Activated CD4-positive, alpha-beta T cell treated with anti-CD3 and anti-CD28 coated beads, Interleukin-2, amount 10 ng/mL, durations not matched to agents 7 days and 5 days (primary cell): ENCODE measurements at regions of chr7 and their contacts with region 1.

Region 1: DNA sequence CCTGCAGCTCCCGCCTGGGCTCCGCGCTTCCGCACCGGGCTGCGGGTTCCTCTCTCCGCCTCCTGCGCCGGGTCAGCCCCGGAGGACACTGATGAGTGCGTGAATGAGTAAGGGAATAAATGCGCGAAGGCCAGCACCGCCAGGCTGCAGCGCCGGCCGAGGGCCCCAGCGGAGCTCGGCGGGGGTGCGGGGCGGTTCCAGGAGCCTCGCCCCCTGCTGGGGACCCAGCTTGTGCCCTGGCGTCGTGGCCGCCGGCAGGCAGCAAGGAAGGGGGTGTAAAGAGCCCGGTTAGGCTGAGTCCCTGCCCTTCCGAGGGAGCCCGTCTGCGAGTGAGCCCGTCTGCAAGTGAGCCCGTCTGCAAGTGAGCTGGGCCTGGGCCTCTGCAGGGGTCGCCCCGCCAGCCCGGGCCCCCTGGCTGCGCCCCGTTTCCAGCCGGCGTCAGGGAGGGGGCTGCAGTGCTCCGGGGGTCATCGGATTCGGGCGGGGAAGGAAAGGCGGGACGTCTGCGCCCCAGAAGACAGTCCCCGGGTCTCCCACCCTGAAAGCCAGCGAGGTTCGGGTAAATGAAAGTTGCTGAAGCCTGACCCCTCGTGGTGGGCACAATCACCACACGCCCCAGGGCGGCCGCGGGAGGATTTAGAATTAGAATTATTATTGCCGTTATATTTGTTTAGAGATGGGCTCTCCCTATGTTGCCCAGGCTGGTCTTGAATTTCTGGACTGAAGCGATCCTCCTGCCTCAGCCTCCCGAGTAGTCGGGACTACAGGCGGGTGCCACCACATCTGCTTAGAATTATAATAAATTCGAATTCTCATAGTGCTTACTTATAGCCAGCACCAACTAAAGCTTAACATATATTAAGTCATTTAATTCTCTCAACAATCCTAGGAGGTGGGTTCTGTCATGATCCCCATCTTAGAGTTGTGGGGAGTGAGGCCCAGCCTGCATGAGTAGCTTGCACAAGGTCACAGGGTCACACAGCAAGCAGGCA is 8.6 kb upstream of the CRYGN start:
- DNase-seq: peak; percentile 82
- H3K4me3 Mint-ChIP-seq: peak overlapping the region; percentile 68
- H3K27ac Mint-ChIP-seq: peak overlapping the region; percentile 79
- H3K4me1 Mint-ChIP-seq: peaks cover 12% of the 10 kb centered on the region
- H3K27me3 Mint-ChIP-seq: peaks cover 16% of the 10 kb centered on the region

Region 2: DNA sequence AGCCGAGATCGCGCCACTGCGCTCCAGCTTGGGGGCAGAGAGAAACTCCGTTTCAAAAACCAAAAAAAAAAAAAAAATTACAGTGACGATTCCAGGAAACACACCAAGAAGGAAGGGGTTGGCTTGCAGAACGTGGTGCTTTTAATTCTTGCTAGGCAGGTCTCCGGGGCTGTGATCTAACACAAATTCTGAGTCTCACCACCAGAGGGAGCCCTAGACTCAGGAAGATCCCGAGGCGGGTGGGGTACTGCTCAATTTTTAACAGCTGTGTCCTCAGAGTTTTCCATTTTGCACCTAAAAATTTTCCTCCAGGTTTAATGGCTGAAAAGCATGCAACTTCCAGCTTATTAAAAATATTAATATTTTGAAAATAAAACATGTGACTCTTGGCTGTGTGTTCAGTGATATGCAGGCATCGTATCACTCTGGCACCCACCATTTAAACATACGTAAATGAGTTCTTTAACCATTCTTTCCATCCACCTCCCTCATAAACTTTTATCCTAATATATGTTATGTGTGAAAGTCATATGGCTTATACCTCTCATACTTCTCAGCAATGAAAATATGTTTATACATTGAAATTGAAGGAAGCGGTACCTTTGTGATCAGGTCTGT is 133.4 kb before region 1 on chr7:
- CTCF ChIA-PET with region 1: interaction called, 10 read pairs
- POLR2A ChIA-PET with region 1: no interaction called
- DNase-seq: peak; percentile 89
- H3K4me3 Mint-ChIP-seq: no peak overlapping the region
- H3K27ac Mint-ChIP-seq: peak overlapping the region; percentile 81
- H3K4me1 Mint-ChIP-seq: peaks cover 16% of the 10 kb centered on the region
- H3K27me3 Mint-ChIP-seq: no peaks in the 10 kb centered on the region

Region 3: GRCh38 chr7:151340794-151341356 is 107.7 kb before region 1 on chr7:
- CTCF ChIA-PET with region 1: no interaction called
- POLR2A ChIA-PET with region 1: no interaction called
- DNase-seq: no peak
- H3K4me3 Mint-ChIP-seq: peak overlapping the region; percentile 86
- H3K27ac Mint-ChIP-seq: peak overlapping the region; percentile 85
- H3K4me1 Mint-ChIP-seq: peaks cover 31% of the 10 kb centered on the region
- H3K27me3 Mint-ChIP-seq: no peaks in the 10 kb centered on the region

Region 4: GRCh38 chr7:151351027-151351426 is 97.5 kb before region 1 on chr7:
- CTCF ChIA-PET with region 1: interaction called, 11 read pairs
- POLR2A ChIA-PET with region 1: no interaction called
- DNase-seq: peak; percentile 40
- H3K4me3 Mint-ChIP-seq: peak overlapping the region; percentile 45
- H3K27ac Mint-ChIP-seq: peak overlapping the region; percentile 92
- H3K4me1 Mint-ChIP-seq: peaks cover 59% of the 10 kb centered on the region
- H3K27me3 Mint-ChIP-seq: no peaks in the 10 kb centered on the region

Region 5: GRCh38 chr7:151368136-151368571 is 80.4 kb before region 1 on chr7:
- CTCF ChIA-PET with region 1: interaction called, 26 read pairs
- POLR2A ChIA-PET with region 1: no interaction called
- DNase-seq: peak; percentile 79
- H3K4me3 Mint-ChIP-seq: no peak overlapping the region
- H3K27ac Mint-ChIP-seq: no peak overlapping the region
- H3K4me1 Mint-ChIP-seq: peaks cover 18% of the 10 kb centered on the region
- H3K27me3 Mint-ChIP-seq: no peaks in the 10 kb centered on the region

Region 6: DNA sequence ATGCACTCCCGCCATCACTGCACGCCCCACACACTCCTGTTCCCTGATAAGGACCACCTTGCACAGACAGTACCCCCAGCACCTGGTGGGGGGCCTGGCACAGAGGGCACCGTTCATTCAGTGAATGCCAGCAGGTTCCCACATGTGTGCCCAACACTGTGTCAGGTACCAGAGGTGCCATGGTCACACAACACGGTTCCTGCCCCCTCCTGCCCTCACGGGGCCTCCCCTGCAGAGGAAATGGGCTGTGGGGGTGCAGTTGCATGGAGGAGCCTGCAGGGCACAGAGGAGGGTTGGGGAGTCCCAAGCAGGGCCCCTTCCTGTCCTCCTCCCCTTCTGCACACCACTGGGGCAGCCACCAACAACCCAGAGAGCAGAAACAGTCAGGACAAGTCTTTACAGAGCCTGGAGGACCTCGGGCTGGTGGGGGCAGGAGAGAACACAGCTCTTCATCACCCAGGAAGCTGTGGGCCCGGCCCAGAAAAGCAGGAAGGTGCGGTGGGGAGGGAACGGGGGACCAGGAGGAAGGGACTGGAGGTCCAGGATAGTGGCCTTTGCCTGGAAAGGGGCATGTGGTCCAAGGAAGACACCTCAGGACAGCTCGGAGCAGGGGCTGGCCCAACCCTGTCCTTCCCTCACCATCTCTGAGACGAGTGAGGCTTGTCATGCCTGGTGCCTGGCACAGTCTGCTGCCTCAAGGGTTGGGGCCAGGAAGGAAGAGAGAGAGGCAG is 15.6 kb before region 1 on chr7:
- CTCF ChIA-PET with region 1: interaction called, 21 read pairs
- POLR2A ChIA-PET with region 1: interaction called, 3 read pairs
- DNase-seq: peak; percentile 72
- H3K4me3 Mint-ChIP-seq: peak overlapping the region; percentile 5
- H3K27ac Mint-ChIP-seq: peak overlapping the region; percentile 89
- H3K4me1 Mint-ChIP-seq: peaks cover 55% of the 10 kb centered on the region
- H3K27me3 Mint-ChIP-seq: no peaks in the 10 kb centered on the region

Region 7: GRCh38 chr7:151579644-151580043 is 131.1 kb after region 1 on chr7:
- CTCF ChIA-PET with region 1: no interaction called
- POLR2A ChIA-PET with region 1: no interaction called
- DNase-seq: no peak
- H3K4me3 Mint-ChIP-seq: no peak overlapping the region
- H3K27ac Mint-ChIP-seq: no peak overlapping the region
- H3K4me1 Mint-ChIP-seq: no peaks in the 10 kb centered on the region
- H3K27me3 Mint-ChIP-seq: no peaks in the 10 kb centered on the region

Region 8: GRCh38 chr7:151631968-151632749 is 183.6 kb after region 1 on chr7:
- CTCF ChIA-PET with region 1: interaction called, 12 read pairs
- POLR2A ChIA-PET with region 1: no interaction called
- DNase-seq: peak; percentile 84
- H3K4me3 Mint-ChIP-seq: peak overlapping the region; percentile 97
- H3K27ac Mint-ChIP-seq: peak overlapping the region; percentile 98
- H3K4me1 Mint-ChIP-seq: peaks cover 34% of the 10 kb centered on the region
- H3K27me3 Mint-ChIP-seq: no peaks in the 10 kb centered on the region